IMR-90 (cell line): ENCODE measurements at regions of chr15 and their contacts with region 1.

Region 1: DNA sequence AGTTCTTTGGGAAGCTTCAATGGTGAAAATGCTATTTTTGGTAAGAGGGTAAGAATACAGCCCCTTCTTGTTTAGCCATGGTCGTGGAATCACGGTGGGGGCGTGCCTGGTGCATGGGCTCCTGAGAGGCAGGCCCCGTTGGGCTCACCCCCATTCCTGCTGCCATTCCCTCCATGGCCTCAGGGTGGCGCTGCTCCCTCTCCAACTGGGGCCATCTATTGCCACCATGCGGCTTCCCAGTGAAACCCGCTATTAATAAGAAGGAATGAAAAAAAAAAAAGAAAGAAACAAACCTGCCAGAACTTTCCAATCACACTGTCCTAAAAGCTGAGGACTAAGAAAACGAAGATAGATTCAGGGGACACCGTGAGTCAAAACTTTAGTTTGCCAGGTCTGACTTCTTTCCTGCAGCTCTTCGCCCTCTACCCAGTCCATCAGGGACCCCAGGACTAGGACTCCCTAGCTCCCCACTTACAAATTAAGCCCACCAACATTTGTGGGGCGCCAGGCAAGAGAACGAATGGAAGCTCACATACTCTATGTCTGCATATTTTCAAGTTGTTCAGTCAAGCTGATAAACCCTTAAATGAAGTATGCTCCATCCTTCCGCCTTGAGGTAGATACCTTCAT is 30.6 kb upstream of the ABHD2 start:
- DNase-seq: peak; percentile 70
- ATAC-seq: peak; percentile 96
- H3K4me3 ChIP-seq: no peak overlapping the region
- H3K27ac ChIP-seq: no peak overlapping the region
- H3K4me1 ChIP-seq: peaks cover under 1% of the 10 kb centered on the region; the same call in 1 of the 2 replicates
- H3K27me3 ChIP-seq: no peaks in the 10 kb centered on the region
- CTCF ChIP-seq: peak; percentile 100
- POLR2A ChIP-seq: peak; percentile 73
- RAD21 ChIP-seq: peak; percentile 100

Region 2: GRCh38 chr15:88657326-88658069 is 400.1 kb before region 1 on chr15:
- CTCF ChIA-PET with region 1: no interaction called
- POLR2A ChIA-PET with region 1: no interaction called
- dilution Hi-C with region 1: no loop called
- in situ Hi-C with region 1: no loop called
- intact Hi-C with region 1: loop called (anchors 5 kb)
- DNase-seq: peak; percentile 61
- ATAC-seq: peak; percentile 74
- H3K4me3 ChIP-seq: no peak overlapping the region
- H3K27ac ChIP-seq: no peak overlapping the region
- H3K4me1 ChIP-seq: peaks cover 13% of the 10 kb centered on the region
- H3K27me3 ChIP-seq: no peaks in the 10 kb centered on the region
- CTCF ChIP-seq: peak; percentile 84
- POLR2A ChIP-seq: no peak
- RAD21 ChIP-seq: peak; percentile 93

Region 3: DNA sequence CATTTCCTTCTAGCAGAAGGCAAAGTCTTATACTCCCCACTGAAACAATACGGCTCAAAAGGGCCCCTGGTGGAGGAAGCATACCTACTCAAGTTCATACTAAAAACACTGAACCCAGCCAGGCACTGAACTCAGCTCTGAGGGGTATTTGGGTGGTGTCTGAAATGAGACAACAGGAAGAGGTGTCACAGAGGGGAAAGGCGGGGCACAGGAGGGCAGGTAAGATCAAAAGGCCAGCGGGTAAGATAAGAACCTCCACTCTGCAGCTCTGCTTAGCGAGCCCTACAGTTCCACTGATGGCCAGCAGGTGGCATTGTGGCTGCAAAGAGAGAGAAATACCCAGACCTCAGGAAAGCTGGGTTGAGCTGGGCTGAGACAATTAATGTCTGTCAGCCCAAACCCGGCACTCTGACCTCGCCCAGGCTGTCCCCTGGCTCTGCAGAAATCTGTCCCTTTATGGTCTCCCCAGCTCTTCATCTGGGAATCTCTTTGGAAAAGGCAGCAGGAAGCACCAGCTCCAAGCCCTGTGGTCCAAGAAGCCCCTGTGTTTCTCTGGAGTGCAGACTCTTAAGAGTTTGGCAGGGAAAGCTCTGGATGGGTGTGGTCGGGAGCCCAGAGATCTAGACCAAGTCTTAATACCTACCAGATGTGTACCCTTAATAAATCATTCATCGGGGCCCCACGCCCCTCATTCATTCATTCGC is 152.8 kb before region 1 on chr15:
- CTCF ChIA-PET with region 1: interaction called, 6 read pairs
- POLR2A ChIA-PET with region 1: no interaction called
- dilution Hi-C with region 1: no loop called
- in situ Hi-C with region 1: no loop called
- intact Hi-C with region 1: loop called (anchors 2 kb)
- DNase-seq: peak; percentile 70
- ATAC-seq: peak; percentile 84
- H3K4me3 ChIP-seq: no peak overlapping the region
- H3K27ac ChIP-seq: no peak overlapping the region
- H3K4me1 ChIP-seq: peaks cover 18% of the 10 kb centered on the region
- H3K27me3 ChIP-seq: no peaks in the 10 kb centered on the region
- CTCF ChIP-seq: peak; percentile 92
- POLR2A ChIP-seq: no peak; the same call in 1 of the 2 replicates
- RAD21 ChIP-seq: peak; percentile 91

Region 4: GRCh38 chr15:89129123-89129815 is 71.7 kb after region 1 on chr15:
- CTCF ChIA-PET with region 1: interaction called, 12 read pairs
- POLR2A ChIA-PET with region 1: no interaction called
- dilution Hi-C with region 1: no loop called
- in situ Hi-C with region 1: no loop called
- intact Hi-C with region 1: loop called (anchors 1 kb)
- DNase-seq: peak; percentile 25
- ATAC-seq: peak; percentile 51; the same call in 1 of the 2 replicates
- H3K4me3 ChIP-seq: no peak overlapping the region
- H3K27ac ChIP-seq: no peak overlapping the region
- H3K4me1 ChIP-seq: peaks cover 4% of the 10 kb centered on the region; the same call in 1 of the 2 replicates
- H3K27me3 ChIP-seq: no peaks in the 10 kb centered on the region
- CTCF ChIP-seq: peak; percentile 74
- POLR2A ChIP-seq: no peak
- RAD21 ChIP-seq: peak; percentile 70

Region 5: GRCh38 chr15:89171136-89172072 is 113.8 kb after region 1 on chr15:
- CTCF ChIA-PET with region 1: interaction called, 20 read pairs
- POLR2A ChIA-PET with region 1: no interaction called
- dilution Hi-C with region 1: no loop called
- in situ Hi-C with region 1: loop called (anchors 5 kb)
- intact Hi-C with region 1: no loop called
- DNase-seq: peak; percentile 36
- ATAC-seq: peak; percentile 50
- H3K4me3 ChIP-seq: no peak overlapping the region
- H3K27ac ChIP-seq: no peak overlapping the region
- H3K4me1 ChIP-seq: peaks cover 12% of the 10 kb centered on the region
- H3K27me3 ChIP-seq: no peaks in the 10 kb centered on the region
- CTCF ChIP-seq: peak; percentile 63
- POLR2A ChIP-seq: no peak
- RAD21 ChIP-seq: peak; percentile 70

Region 6: GRCh38 chr15:89177633-89178306 is 120.2 kb after region 1 on chr15:
- CTCF ChIA-PET with region 1: interaction called, 20 read pairs
- POLR2A ChIA-PET with region 1: no interaction called
- dilution Hi-C with region 1: no loop called
- in situ Hi-C with region 1: loop called (anchors 5 kb)
- intact Hi-C with region 1: loop called (anchors 1 kb)
- DNase-seq: peak; percentile 83
- ATAC-seq: peak; percentile 89
- H3K4me3 ChIP-seq: no peak overlapping the region
- H3K27ac ChIP-seq: 0 out of 2 replicates have a peak overlapping the region, but pooled peaks have one; percentile 8
- H3K4me1 ChIP-seq: peaks cover 3% of the 10 kb centered on the region; the same call in 1 of the 2 replicates
- H3K27me3 ChIP-seq: no peaks in the 10 kb centered on the region
- CTCF ChIP-seq: peak; percentile 92
- POLR2A ChIP-seq: no peak
- RAD21 ChIP-seq: peak; percentile 85

Region 7: GRCh38 chr15:89299896-89300295 is 242.3 kb after region 1 on chr15:
- CTCF ChIA-PET with region 1: no interaction called
- POLR2A ChIA-PET with region 1: no interaction called
- dilution Hi-C with region 1: no loop called
- in situ Hi-C with region 1: no loop called
- intact Hi-C with region 1: loop called (anchors 10 kb)
- DNase-seq: peak; percentile 64
- ATAC-seq: peak; percentile 91
- H3K4me3 ChIP-seq: no peak overlapping the region
- H3K27ac ChIP-seq: no peak overlapping the region
- H3K4me1 ChIP-seq: no peaks in the 10 kb centered on the region
- H3K27me3 ChIP-seq: no peaks in the 10 kb centered on the region
- CTCF ChIP-seq: peak; percentile 54
- POLR2A ChIP-seq: no peak
- RAD21 ChIP-seq: peak; percentile 67